AG04450 (cell line): ENCODE measurements at regions of chr1 and their contacts with region 1.

Region 1: DNA sequence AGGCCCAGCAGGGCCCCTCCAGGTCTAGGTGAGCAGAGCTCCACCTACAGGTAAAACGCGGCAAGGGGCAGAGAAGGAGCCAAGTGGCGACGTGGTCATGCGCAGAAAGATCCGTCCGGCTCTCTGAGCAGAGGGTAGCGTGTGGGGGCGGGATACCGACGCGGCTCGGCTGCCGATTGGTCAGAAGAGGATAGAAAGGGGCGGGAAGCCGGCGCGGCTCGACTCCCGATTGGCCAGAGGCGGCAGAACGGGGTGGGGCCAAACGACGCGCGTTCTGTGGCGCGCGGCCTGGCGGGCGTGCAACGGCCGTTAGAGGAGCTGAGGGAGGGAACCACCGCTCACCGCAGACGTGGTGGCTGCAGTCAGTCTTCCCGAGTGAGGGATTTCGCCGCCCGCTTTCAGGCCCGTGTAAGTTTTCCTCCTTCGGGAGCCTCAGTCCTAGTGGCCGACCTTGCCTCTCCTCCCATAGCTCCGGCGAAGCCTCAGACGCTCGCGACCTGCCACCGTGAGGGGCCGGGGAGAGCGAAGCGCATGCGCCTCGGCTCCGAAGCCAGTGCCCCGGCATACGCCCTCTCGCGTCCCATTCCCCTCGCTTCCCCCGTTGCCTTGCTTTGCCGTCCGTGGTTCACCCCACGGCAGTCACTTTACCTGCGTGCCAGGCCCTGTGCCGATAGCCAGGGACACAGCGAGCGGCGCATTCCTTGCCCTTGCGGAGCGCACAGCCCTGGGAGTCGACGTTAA is at the start of gene CEP85:
- DNase-seq: peak; percentile 93
- H3K4me3 ChIP-seq: peak within 1 kb of the TSS; percentile 99
- H3K27ac ChIP-seq: peak within 1 kb of the TSS; percentile 82
- H3K27me3 ChIP-seq: no peaks in the 10 kb centered on the region
- CTCF ChIP-seq: peak; percentile 85
- polyA plus RNA-seq, gene CEP85: 5.7 and 5.8 TPM in 2 replicates

Region 2: GRCh38 chr1:26169669-26170471 is 64.2 kb before region 1 on chr1 and contains the start of gene ZNF593:
- CTCF ChIA-PET with region 1: interaction called, 22 read pairs
- POLR2A ChIA-PET with region 1: interaction called, 8 read pairs
- DNase-seq: peak; percentile 62
- H3K4me3 ChIP-seq: peak within 1 kb of the TSS; percentile 87
- H3K27ac ChIP-seq: peak within 1 kb of the TSS; percentile 52
- H3K27me3 ChIP-seq: peaks cover 5% of the 10 kb centered on the region
- CTCF ChIP-seq: peak; percentile 83
- polyA plus RNA-seq, gene ZNF593: 19.7 and 28.6 TPM in 2 replicates

Region 3: DNA sequence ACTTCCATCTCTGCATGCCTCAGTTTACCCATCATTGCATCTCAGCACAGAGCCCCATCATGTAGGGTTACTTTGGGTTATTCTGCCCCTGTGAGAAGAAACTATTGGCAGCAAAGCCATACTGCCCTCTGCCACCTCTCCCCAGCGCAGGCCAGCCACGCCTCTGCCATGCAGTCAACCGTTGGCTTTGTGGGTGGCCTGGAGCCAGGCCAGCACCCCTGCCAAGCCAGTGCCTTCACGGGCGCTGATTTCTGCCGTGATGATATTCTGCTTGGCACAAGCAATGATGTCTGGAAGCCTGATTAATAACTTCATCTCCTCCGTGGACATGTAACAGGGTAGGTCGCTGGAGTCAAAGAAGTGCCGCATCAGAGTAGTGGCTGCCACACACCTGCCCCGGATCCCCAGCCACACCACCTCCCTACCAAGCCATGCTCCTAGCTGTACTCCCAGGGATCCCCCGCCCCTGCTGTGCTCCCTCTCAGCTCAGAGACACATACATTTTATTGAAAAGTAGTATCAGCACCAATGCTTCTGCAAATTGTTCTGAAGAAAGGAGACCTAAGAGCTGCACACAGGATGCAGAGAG is 15.1 kb before region 1 on chr1:
- CTCF ChIA-PET with region 1: interaction called, 11 read pairs
- POLR2A ChIA-PET with region 1: no interaction called
- DNase-seq: no peak
- H3K4me3 ChIP-seq: no peak overlapping the region
- H3K27ac ChIP-seq: no peak overlapping the region
- H3K27me3 ChIP-seq: peaks cover 15% of the 10 kb centered on the region
- CTCF ChIP-seq: no peak

Region 4: DNA sequence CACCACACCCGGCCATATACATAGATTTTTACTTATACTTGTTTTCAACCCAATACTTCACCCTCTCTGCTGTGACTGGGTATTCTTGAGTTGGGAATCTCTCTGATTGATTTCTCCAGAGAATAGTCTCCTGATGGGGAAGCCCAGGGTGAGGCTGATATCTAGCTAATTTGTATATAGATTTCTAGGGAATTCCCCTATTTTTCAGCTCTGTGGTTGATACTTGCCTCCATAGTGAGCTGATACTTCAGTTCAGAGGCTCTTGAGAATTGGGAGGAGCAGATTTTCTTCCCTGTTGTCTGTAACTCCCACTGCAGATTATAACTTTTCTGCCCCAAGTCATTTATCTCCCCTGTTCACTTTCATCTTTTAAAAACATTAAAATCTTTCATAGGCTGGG is 31.3 kb after region 1 on chr1:
- CTCF ChIA-PET with region 1: interaction called, 16 read pairs
- POLR2A ChIA-PET with region 1: no interaction called
- DNase-seq: no peak
- H3K4me3 ChIP-seq: no peak overlapping the region
- H3K27ac ChIP-seq: no peak overlapping the region
- H3K27me3 ChIP-seq: no peaks in the 10 kb centered on the region
- CTCF ChIP-seq: no peak

Region 5: DNA sequence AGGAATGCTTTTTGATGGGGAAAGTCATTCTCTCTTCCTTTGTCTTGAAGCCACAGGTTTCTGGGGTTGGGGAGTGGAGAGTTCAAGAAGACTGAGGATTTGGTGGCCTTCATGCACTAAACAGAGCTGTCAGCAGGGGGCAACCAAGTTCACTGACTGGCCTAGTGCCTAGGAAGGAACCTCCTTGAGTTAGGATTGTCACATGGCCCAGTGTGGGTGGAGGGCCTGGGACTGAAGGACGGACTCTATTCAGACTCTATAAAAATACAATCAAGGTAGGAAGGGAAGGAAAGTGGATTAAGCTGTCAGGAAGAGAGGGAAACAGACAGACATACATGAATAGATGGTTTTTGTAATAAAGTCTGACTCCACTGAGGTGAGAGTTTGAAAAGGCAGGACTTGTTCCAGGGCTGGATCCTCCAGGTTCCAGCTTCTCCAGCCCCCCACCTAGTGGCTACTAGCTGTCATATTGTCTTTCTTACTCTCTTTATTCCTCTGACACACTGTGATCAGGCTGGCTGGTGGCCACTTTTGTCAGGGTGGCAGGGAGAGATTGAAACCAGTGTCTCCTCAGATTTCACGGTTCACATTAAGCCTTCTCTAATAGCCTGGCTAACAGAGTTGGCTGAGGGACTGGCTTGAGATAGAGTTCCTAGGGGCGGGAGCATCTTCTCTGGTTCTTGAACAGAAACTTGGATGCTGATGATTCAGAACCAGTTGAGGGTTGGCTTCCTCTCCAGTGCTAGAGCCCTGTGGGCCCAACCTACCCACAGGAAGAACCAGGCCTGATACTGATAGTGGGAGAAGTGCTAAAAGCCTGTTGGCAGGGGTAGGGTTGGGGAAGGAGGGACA is 41.7 kb after region 1 on chr1:
- CTCF ChIA-PET with region 1: interaction called, 29 read pairs
- POLR2A ChIA-PET with region 1: interaction called, 3 read pairs
- DNase-seq: peak; percentile 77
- H3K4me3 ChIP-seq: no peak overlapping the region
- H3K27ac ChIP-seq: peak overlapping the region; percentile 61
- H3K27me3 ChIP-seq: no peaks in the 10 kb centered on the region
- CTCF ChIP-seq: peak; percentile 78

Region 6: DNA sequence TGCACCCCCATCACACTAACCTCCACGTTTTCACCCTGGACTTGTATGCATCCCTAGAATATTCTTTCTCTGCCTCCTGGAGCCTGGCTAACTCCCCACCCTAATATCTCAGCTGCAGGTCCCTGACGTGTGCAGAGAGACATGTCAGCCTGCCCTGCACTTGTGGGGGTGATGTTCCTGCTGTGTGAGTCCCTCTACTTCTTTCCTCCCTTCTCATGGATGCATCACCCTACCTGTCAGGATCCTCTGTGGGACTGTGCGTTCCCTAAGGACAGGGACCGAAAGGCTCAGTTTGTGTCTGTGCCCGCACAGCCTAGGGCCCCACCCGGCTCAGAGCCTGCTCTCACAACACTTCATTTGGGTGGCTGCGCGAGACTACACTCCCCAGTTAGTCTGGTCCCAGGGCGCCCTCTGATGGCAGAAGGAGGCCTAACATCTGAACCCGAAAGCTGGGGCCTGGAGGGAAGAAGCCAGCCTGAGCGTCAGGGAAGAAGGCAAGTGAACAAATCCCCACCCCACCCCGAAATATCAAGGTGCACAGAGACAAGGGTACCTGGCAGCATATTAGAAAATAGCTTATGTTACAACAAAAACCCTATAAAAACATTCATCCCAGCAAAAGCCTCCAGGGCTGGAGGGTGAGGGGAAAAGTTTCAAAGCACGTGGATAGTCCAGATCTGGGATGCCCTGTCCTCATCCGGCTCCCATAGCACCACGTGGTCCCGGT is 87.4 kb after region 1 on chr1:
- CTCF ChIA-PET with region 1: interaction called, 12 read pairs
- POLR2A ChIA-PET with region 1: interaction called, 3 read pairs
- DNase-seq: peak; percentile 52
- H3K4me3 ChIP-seq: no peak overlapping the region
- H3K27ac ChIP-seq: no peak overlapping the region
- H3K27me3 ChIP-seq: no peaks in the 10 kb centered on the region
- CTCF ChIP-seq: peak; percentile 88

Region 7: DNA sequence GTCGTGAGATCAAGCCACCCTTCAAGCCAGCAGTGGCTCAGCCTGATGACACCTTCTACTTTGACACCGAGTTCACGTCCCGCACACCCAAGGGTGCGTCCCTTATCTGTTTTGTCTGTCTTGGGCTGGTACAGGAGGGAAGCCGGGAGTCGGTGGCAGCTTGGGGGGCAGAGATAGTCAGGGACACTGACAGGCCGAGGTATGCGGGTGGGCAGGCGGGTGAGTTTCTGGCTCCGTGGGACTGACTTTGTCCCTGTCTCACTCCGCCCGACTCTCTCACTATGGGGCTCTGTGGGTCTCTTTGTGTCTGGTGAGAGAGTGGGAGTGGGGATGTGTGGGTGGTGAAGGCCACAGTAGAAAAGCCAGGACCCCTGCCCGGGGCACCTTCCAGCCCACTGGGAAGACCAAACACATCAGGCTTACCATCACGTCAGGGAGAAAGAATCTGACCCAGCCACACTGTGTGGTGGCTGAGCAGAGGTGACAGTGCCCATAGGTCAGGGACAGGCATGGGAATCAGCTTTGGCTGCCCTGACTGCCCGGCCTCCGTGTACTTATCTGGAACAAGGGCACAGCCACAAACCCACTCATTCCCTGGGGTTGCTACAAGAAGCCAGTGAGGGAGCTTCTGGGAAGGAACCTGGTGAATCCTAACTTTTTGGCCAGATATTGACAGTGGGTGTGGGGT is 323.1 kb after region 1 on chr1:
- CTCF ChIA-PET with region 1: no interaction called
- POLR2A ChIA-PET with region 1: interaction called, 10 read pairs
- DNase-seq: no peak
- H3K4me3 ChIP-seq: no peak overlapping the region
- H3K27ac ChIP-seq: no peak overlapping the region
- H3K27me3 ChIP-seq: no peaks in the 10 kb centered on the region
- CTCF ChIP-seq: no peak